K562 (cell line): ENCODE measurements at regions of chr2 and their contacts with region 1.

Region 1: GRCh38 chr2:183371545-183371944 is 247.3 kb downstream of the NUP35 start:
- DNase-seq: no peak
- ATAC-seq: no peak
- H3K4me3 ChIP-seq: no peak overlapping the region
- H3K27ac ChIP-seq: no peak overlapping the region
- H3K4me1 ChIP-seq: no peaks in the 10 kb centered on the region
- H3K27me3 ChIP-seq: no peaks in the 10 kb centered on the region
- CTCF ChIP-seq: no peak
- EP300 ChIP-seq: no peak
- POLR2A ChIP-seq: no peak
- RAD21 ChIP-seq: no peak

Region 2: DNA sequence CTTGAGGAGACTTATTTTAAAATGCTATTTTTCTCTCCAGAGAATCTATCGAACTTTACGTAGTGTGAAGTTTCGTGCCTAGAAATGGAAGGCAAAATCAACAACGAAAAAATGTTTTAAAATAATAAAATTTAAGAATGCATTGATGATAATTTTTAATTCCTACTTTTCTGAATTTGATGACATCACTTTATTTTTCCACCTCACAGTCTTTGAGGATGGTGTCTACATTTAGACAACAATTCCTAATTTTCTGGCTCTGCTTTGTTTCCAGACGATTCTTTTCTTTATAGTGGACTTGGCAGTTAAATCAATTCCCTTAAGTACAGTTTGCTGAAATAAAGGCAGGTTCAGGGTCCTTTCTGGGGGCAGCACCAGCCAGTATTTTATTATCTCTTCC is 51.1 kb after region 1 on chr2:
- CTCF ChIA-PET with region 1: no interaction called
- POLR2A ChIA-PET with region 1: no interaction called
- in situ Hi-C with region 1: no loop called
- intact Hi-C with region 1: loop called (anchors 5 kb)
- DNase-seq: no peak
- ATAC-seq: no peak
- H3K4me3 ChIP-seq: no peak overlapping the region
- H3K27ac ChIP-seq: no peak overlapping the region
- H3K4me1 ChIP-seq: no peaks in the 10 kb centered on the region
- H3K27me3 ChIP-seq: no peaks in the 10 kb centered on the region
- CTCF ChIP-seq: no peak
- EP300 ChIP-seq: no peak
- POLR2A ChIP-seq: no peak
- RAD21 ChIP-seq: no peak